Spleen (tissue), 13 donors: ENCODE measurements at regions of chr3 and their contacts with region 1.

Region 1: DNA sequence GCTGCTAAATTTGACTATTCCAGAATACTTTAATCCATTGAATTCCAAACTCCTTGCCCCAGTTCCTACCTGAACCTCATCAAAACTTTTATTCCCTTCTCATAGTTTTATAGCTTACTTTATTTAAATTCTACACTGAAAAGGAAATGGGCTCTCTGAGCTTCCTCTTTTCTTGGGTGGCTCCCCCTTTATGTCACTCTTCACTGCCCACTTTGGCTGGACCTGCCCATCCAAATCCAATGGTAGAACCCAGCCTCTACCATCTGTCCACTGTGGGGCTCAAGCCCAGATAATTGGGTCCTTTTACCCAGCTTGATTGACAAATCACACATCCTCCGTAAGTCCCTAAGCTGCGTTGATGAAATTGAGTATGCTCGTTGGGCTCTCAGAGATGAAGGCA is 216.5 kb downstream of the BBX start:
- DNase-seq: no peak
- H3K4me3 ChIP-seq: no peak overlapping the region
- H3K27ac ChIP-seq: no peak overlapping the region
- H3K4me1 ChIP-seq: peaks cover 0 to 31% (median 11%) of the 10 kb centered on the region in 6 donors
- H3K27me3 ChIP-seq: no peaks in the 10 kb centered on the region
- CTCF ChIP-seq: no peak
- POLR2A ChIP-seq: no peak

Region 2: GRCh38 chr3:107574650-107575049 is 164.6 kb before region 1 on chr3:
- intact Hi-C with region 1: loop called (anchors 10 kb)
- DNase-seq: no peak
- H3K4me3 ChIP-seq: no peak overlapping the region
- H3K27ac ChIP-seq: no peak overlapping the region
- H3K4me1 ChIP-seq: peaks cover 0 to 15% (median 0%) of the 10 kb centered on the region in 6 donors
- H3K27me3 ChIP-seq: no peaks in the 10 kb centered on the region
- CTCF ChIP-seq: peak in 7 of 11 experiments; percentile 37 to 53 (median 45)
- POLR2A ChIP-seq: no peak

Region 3: GRCh38 chr3:107680698-107681097 is 58.5 kb before region 1 on chr3:
- intact Hi-C with region 1: loop called (anchors 10 kb)
- DNase-seq: no peak
- H3K4me3 ChIP-seq: no peak overlapping the region
- H3K27ac ChIP-seq: peak overlapping the region in 1 of 8 donors; percentile 3
- H3K4me1 ChIP-seq: peaks cover 29 to 74% (median 38%) of the 10 kb centered on the region in 6 donors
- H3K27me3 ChIP-seq: no peaks in the 10 kb centered on the region
- CTCF ChIP-seq: no peak
- POLR2A ChIP-seq: no peak

Region 4: GRCh38 chr3:108538083-108538482 is 798.9 kb after region 1 on chr3:
- intact Hi-C with region 1: no loop called
- DNase-seq: no peak
- H3K4me3 ChIP-seq: no peak overlapping the region
- H3K27ac ChIP-seq: peak overlapping the region in 1 of 8 donors; percentile 11
- H3K4me1 ChIP-seq: peaks cover 0 to 9% (median 2%) of the 10 kb centered on the region in 6 donors
- H3K27me3 ChIP-seq: no peaks in the 10 kb centered on the region
- CTCF ChIP-seq: no peak
- POLR2A ChIP-seq: no peak